ENCODE measurements at regions of chr4 and their contacts with region 1.

Region 1: GRCh38 chr4:82428969-82429727 is 1.1 kb downstream of the HNRNPDL start:
- DNase-seq: peak; percentile 77 to 94 (median 90)
- H3K4me3 ChIP-seq: peak overlapping the region; percentile 62 to 98 (median 92)
- H3K27ac ChIP-seq: peak overlapping the region; percentile 90 to 100 (median 98)
- H3K27me3 ChIP-seq: no peaks in the 10 kb centered on the region
- CTCF ChIP-seq: peak; percentile 67 to 99 (median 88)

Region 2: GRCh38 chr4:82284858-82285805 is 144.0 kb before region 1 on chr4:
- intact Hi-C with region 1: loop called (anchors 2 to 5 kb)
- DNase-seq: peak; percentile 89 to 100 (median 99)
- H3K4me3 ChIP-seq: peak overlapping the region; percentile 42 to 77 (median 65)
- H3K27ac ChIP-seq: peak overlapping the region in 51 of 59 donors; percentile 1 to 89 (median 73)
- H3K27me3 ChIP-seq: no peaks in the 10 kb centered on the region
- CTCF ChIP-seq: peak; percentile 66 to 95 (median 87)